AG04449 (cell line): ENCODE measurements at regions of chr1 and their contacts with region 1.

Region 1: DNA sequence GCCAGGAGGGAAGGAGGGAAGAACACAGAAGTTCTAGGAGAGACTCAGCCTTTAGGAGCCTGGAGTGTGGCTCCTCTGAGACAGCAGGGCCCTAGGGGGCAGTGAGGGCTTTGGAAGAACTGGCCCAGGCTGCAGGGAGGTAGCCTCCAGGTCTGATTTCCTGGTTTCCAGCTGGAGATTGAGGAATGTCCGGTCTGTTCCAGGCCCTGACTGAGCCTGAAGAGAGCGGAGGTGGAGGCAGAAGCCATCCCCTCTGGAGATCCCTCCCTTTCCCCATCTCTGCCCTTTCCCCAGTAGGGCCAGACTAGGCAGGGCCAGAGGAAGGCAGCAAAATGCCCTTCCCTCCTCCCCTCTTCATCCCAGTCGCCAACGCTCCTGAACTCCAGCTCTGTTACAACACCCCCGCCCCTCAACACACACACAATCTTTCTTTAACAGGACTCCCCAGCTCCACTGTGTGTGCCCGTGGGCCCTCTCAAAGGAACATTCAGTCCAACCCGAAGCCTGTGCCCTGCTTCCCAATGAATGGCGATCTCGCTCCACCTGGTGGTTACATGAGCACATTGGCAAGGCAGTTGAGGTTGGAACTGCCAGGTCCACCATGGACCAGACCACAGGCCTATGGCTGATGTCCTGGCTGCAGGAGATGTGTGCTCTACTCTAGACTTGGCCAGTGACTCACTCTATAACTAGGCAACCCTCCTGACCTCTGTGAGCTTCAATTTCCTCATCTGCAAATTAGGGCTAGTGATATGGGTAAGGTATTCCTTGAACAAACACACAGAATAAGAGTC is 32.0 kb downstream of the MAP7D1 start:
- DNase-seq: peak; percentile 62
- H3K4me3 ChIP-seq: no peak overlapping the region
- CTCF ChIP-seq: peak; percentile 97

Region 2: GRCh38 chr1:36099681-36100341 is 88.2 kb before region 1 on chr1:
- CTCF ChIA-PET with region 1: interaction called, 104 read pairs
- POLR2A ChIA-PET with region 1: no interaction called
- DNase-seq: no peak
- H3K4me3 ChIP-seq: no peak overlapping the region
- CTCF ChIP-seq: peak; percentile 91

Region 3: DNA sequence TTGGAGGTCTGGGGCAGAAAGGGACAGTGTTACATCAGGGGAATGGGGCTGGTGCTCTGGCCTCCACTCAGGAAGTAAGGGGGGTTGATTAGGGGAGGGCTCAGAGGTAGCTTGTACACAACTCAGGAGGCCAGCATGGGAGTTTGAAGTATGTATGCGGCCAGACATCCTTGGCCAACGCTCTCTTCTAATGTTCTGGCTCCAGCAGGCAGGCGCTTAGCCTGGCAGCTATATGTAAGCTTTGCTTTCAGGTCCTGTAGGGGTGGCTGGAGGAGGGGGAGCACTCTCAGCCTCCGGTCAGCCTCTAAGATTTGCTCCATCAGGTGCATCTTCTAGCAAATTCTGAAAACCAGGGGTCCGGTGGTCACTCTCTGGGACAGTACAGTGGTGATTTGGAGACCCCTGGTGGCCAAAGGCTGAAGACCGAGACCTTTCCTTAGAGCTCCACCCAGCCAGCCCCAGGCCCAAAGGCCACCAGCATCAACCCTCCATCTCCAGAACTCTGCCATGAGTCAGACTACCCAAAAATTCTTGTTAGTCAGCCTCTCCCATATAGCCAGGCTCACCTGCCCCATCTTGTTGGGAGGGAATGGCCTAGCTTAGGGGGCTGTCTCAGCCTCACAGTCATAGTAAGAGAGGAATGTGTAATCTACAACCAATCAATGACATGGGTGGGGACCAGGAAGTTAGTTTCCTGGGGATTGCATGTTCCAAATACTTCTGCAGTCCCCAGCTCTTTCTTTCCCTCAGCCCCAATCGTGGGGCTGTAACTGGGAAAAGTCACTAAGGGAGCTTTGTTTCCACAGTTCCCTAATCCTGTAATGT is 53.3 kb before region 1 on chr1:
- CTCF ChIA-PET with region 1: interaction called, 64 read pairs
- POLR2A ChIA-PET with region 1: interaction called, 3 read pairs
- DNase-seq: no peak
- H3K4me3 ChIP-seq: no peak overlapping the region
- CTCF ChIP-seq: peak; percentile 77

Region 4: DNA sequence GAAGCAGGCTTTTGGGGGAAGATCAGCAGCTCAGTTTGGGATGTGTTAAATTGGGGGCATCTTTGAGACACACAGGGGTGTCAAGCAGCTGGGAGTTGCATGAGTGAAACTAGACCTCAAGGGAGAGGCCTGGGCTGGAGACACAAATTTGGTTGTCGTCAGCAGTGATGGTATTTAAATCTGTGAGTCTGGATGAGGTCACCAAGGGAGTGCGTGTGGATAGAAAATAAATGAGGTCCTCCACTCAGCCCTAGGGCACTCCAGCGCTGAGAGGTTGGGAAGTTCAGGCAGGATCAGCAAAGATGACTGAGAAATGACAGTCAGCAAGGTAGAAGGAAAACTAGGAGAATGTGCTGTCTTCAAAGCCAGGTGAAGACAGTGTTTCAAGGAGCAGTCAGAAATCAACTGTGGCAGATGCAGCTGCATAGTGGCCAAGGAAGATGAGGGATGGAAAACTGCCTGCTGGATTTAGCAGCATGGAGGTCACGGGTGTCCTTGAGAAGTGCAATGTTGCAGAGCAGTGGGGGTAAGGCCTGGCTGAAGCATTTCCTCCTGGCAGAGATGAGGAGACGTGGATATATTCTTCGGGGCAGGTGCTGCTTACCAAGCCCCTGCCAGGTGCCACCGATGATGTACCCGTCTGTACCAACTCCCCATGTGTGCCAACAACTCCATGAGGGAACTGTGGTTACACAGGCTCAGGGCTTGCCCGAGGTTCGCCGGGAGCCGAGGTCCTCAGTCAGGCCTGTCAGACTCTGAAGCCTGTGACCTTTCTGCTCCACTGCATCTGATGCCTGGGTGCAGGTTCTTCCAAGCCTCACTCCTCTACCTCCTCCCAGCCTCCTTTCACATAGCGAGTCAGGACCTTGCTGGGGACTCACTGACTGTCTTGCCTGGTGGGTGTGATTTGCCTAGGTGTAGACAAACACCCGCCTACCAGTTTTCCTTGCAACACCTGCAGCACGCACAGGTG is 20.8 kb before region 1 on chr1:
- CTCF ChIA-PET with region 1: interaction called, 54 read pairs
- POLR2A ChIA-PET with region 1: no interaction called
- DNase-seq: no peak
- H3K4me3 ChIP-seq: no peak overlapping the region
- CTCF ChIP-seq: no peak

Region 5: DNA sequence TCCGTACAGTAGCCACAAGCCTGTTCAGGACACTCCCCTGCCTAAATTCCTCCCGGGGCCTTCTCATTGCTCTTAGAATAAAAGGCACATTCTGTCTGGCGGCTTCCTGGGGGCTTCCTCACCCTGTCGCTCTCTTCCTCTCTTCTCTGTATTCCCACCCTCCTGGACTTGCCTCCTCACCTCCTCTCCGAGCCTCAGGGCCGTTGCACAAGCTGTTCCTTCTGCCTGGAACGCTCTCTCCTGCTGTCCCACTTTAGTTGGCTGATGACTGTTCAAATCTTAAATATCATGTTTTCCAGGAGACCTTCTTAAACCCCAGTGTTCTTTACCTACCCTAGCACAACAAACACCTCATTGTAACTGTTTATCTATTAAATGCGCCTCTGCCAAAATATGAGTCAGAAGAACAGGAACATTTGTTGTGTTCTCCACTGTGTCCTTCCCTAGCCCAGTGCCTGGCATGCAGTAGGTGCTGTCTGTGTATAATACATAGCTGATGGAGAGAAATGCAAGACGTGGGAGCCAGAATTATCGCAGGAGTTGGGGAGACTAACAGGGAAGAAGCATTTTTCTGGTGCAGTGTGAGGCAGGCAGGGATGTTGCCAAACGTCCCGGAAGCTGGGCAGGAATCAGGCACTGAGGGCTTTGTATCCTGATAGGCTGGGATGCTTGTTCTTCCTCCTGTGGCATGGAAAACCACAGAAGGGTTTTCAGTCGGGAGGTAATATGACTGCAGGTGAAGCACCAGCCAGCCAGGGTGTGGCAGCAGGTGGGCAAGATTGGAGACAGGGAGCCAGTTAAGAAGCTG is 12.1 kb after region 1 on chr1:
- CTCF ChIA-PET with region 1: interaction called, 32 read pairs
- POLR2A ChIA-PET with region 1: no interaction called
- DNase-seq: no peak
- H3K4me3 ChIP-seq: no peak overlapping the region
- CTCF ChIP-seq: no peak

Region 6: DNA sequence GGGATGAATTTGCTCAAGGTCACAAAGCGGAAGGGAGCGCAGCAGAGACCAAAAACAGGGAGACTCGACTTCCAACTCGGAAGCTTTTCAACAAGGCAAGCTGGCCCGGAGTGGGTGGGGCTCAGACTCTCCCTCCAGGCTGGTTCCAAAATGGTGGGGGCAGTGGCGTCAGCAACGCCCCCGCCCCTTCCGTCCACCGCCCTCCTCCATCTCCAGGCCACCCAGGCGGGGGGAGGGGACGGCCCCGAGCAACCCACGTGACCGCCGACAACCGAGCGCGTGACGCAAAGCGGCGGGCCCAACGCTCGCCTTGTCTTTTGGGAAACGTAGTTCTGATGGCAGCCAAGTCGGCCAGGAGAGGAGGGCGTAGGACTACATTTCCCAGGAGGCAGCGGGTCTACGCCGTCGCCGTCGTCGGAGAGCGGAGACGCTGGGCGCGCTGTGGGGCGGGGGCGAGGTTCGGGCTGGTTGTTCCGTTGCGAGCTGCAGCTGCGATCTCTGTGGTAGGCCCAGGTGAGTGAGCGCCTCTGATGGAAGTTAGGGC is 36.1 kb after region 1 on chr1 and contains the start of gene THRAP3:
- CTCF ChIA-PET with region 1: interaction called, 13 read pairs
- POLR2A ChIA-PET with region 1: no interaction called
- DNase-seq: peak; percentile 95
- H3K4me3 ChIP-seq: peak within 1 kb of the TSS; percentile 85
- CTCF ChIP-seq: no peak